ENCODE measurements at regions of chr1 and their contacts with region 1.

Region 1: GRCh38 chr1:48677306-48678287 is 99.1 kb downstream of the BEND5 start:
- DNase-seq: no peak
- H3K4me3 ChIP-seq: no peak overlapping the region
- H3K27me3 ChIP-seq: no peaks in the 10 kb centered on the region
- CTCF ChIP-seq: peak; percentile 60

Region 2: DNA sequence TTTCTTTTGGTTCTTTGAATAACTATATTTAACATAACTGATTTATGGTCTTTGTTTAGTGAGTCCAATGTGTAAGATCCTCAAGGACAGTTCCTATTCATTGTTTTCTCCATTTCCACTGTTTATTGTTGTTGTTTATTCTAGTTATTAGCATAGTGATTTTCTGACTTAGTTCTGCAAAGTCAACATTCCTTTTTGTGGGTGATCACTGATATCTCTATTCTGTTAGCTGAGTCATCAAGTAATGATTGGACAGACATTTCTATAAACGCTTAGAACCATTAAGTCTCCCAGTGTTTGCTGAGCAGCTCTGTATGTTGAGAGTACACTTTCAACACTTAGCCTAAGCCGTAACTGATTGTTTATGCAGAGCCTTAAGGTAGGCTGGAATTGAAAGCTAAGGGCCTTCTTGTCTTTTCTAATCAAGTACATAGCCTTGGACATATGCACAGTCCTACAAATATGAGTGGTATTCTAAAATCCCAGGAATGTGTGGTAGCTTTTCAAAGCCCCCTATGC is 368.0 kb before region 1 on chr1:
- CTCF ChIA-PET with region 1: no interaction called
- POLR2A ChIA-PET with region 1: no interaction called
- DNase-seq: no peak
- H3K4me3 ChIP-seq: no peak overlapping the region
- H3K27me3 ChIP-seq: no peaks in the 10 kb centered on the region
- CTCF ChIP-seq: no peak

Region 3: GRCh38 chr1:48688102-48688760 is 10.6 kb after region 1 on chr1:
- CTCF ChIA-PET with region 1: interaction called, 10 read pairs
- POLR2A ChIA-PET with region 1: no interaction called
- DNase-seq: no peak
- H3K4me3 ChIP-seq: no peak overlapping the region
- H3K27me3 ChIP-seq: no peaks in the 10 kb centered on the region
- CTCF ChIP-seq: peak; percentile 27; the same call in 1 of the 2 replicates

Region 4: DNA sequence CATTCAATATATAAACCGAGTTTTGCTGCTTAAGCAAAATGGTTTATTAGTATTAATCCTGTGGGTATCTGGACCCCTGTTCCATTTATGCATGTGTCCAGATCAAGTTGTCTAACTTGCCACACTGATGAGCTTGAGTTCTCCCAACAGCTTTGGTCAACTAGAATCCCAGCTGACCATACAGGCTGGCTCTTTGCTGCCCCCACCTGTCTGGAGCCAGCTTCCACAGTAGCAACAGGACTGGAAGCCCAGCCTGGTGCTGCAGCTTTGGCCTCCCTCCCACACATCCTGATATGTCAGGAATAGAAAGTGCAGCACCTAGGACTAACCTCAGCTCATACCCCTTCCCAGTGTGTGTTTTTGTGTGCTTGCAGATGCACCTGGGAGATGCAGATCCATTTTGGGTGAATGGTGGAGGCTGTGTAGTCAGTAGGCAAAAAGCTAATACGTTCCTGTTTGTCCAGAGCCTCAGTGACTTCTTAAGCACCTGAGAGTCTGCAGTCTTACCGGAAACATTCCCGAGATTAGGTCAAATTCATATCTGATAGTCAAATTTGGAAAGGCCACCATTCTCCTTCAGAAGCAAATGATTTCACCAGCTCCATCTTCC is 140.0 kb after region 1 on chr1:
- CTCF ChIA-PET with region 1: interaction called, 42 read pairs
- POLR2A ChIA-PET with region 1: no interaction called
- DNase-seq: no peak
- H3K4me3 ChIP-seq: no peak overlapping the region
- H3K27me3 ChIP-seq: no peaks in the 10 kb centered on the region
- CTCF ChIP-seq: peak; percentile 77

Region 5: DNA sequence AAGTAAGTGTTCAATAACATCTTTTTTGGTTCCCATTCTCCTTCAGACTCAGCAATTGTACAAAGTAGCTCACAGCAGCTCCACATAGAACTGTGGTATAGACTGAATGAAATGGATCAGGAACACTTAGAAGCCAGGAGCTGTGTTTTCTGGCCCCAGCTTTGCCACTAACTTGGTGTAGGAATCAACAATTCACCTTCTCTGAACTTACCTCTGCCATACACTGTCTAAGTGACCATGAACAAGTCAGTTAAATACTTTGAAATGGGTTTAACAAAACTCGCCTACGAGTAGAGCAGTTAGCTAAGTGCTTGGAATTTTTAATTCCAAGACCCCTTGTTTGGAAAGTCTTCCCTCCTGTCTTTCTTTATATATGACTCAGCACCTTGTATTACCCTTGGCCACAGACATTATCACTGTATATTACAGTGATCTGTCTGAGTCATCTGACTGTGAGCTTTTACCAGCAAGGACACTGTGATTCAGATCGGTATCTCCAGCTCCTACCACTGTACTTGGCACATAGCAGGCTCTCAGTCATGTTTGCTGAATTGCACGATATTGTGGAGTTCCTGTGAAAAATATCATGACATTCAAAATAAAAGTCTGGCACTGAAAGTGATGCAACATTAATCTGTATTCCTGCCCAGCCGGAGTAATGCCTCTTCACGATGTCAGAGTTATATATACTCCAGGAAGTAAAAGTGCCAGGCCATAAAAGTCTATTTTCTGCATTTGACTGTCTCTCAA is 200.8 kb after region 1 on chr1:
- CTCF ChIA-PET with region 1: no interaction called
- POLR2A ChIA-PET with region 1: no interaction called
- DNase-seq: peak; percentile 54
- H3K4me3 ChIP-seq: no peak overlapping the region
- H3K27me3 ChIP-seq: no peaks in the 10 kb centered on the region; the same call in 1 of the 2 replicates
- CTCF ChIP-seq: no peak

Measured in BJ (cell line).